Heart left ventricle (tissue), 16 donors: ENCODE measurements at regions of chr6 and their contacts with region 1.

Region 1: DNA sequence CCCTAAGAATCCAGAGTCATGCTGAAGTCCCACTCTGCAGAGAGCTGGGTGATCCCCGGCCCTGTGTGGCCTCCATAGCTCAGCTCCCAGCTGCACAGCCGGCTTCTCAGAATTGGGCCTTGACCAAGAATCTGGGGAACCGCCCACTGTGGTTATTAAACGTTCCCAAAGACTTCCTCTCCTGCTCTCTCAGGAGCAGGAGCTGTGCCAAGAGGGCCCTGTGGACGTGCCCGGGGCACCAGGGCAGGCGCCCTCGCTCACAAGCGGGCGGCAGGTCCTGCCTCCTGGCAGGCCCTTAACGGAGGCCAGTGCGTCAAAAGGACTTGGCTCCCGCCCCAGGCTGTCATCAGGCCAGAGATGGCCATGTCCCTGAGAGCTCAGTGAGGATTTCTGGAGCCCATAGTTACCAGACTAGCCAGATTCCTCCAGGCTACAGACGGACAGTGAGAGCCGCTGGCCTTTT is 30.4 kb downstream of the ZC3H12D start:
- DNase-seq: peak; percentile 96 to 99 (median 97)
- ATAC-seq: peak; percentile 90 to 96 (median 93)
- H3K4me3 ChIP-seq: peak overlapping the region in 4 of 12 donors; percentile 6 to 29 (median 18)
- H3K27ac ChIP-seq: peak overlapping the region; percentile 51 to 91 (median 80)
- H3K4me1 ChIP-seq: peaks cover 4 to 65% (median 50%) of the 10 kb centered on the region in 12 donors
- H3K27me3 ChIP-seq: peaks cover 0 to 31% (median 7%) of the 10 kb centered on the region in 9 donors
- CTCF ChIP-seq: no peak
- POLR2A ChIP-seq: peak in 1 of 2 donors; percentile 27

Region 2: GRCh38 chr6:149484733-149485700 is 30.6 kb after region 1 on chr6 and contains the start of gene ZC3H12D:
- intact Hi-C with region 1: loop called in 1 of 10 experiments (anchors 2 kb)
- DNase-seq: peak; percentile 35 to 83 (median 69)
- ATAC-seq: peak in 3 of 4 donors; percentile 59 to 68 (median 67)
- H3K4me3 ChIP-seq: peak within 1 kb of the TSS in 4 of 12 donors; percentile 2 to 59 (median 20)
- H3K27ac ChIP-seq: peak within 1 kb of the TSS in 11 of 12 donors; percentile 1 to 97 (median 41)
- H3K4me1 ChIP-seq: peaks cover 0 to 55% (median 26%) of the 10 kb centered on the region in 12 donors
- H3K27me3 ChIP-seq: no peaks in the 10 kb centered on the region
- CTCF ChIP-seq: peak in 6 of 12 donors; percentile 3 to 19 (median 11)
- POLR2A ChIP-seq: peak in 1 of 2 donors; percentile 13
- total RNA-seq, gene ZC3H12D: 0.14 to 3.0 (median 0.47) TPM

Region 3: DNA sequence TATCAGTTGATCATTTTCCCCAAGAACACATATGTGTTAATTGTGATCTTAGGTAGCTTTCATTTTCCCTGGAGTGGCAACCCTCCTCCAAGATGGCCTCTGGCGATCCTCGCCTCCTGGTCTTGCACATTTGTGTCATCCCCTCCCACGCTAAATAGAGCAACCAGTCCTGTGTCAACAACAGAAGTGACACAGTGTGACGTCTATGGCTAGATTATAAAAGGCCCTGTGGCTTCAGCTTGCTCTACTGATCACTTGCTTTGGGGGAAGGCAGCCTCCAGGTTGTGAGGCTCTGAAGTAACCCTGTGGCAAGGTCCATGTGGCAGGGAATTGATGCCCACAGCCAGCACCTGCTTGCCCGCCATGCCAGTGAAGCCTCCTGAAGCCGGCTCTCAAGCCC is 657.8 kb after region 1 on chr6:
- intact Hi-C with region 1: no loop called
- DNase-seq: no peak
- ATAC-seq: no peak
- H3K4me3 ChIP-seq: no peak overlapping the region
- H3K27ac ChIP-seq: no peak overlapping the region
- H3K4me1 ChIP-seq: no peaks in the 10 kb centered on the region
- H3K27me3 ChIP-seq: no peaks in the 10 kb centered on the region
- CTCF ChIP-seq: no peak
- POLR2A ChIP-seq: no peak